ENCODE measurements at regions of chr9 and their contacts with region 1.

Region 1: GRCh38 chr9:76393963-76394679 is at the start of gene RFK:
- DNase-seq: peak; percentile 96
- ATAC-seq: peak; percentile 89
- H3K4me3 Mint-ChIP-seq: peak within 1 kb of the TSS; percentile 82
- H3K27ac Mint-ChIP-seq: peak within 1 kb of the TSS; percentile 91
- H3K4me1 Mint-ChIP-seq: peaks cover 11% of the 10 kb centered on the region
- H3K27me3 Mint-ChIP-seq: no peaks in the 10 kb centered on the region; the same call in 1 of the 2 replicates
- CTCF ChIP-seq: no peak
- total RNA-seq, gene RFK: 10.6 to 14.9 TPM (median 13.2 TPM) in 3 replicates

Region 2: DNA sequence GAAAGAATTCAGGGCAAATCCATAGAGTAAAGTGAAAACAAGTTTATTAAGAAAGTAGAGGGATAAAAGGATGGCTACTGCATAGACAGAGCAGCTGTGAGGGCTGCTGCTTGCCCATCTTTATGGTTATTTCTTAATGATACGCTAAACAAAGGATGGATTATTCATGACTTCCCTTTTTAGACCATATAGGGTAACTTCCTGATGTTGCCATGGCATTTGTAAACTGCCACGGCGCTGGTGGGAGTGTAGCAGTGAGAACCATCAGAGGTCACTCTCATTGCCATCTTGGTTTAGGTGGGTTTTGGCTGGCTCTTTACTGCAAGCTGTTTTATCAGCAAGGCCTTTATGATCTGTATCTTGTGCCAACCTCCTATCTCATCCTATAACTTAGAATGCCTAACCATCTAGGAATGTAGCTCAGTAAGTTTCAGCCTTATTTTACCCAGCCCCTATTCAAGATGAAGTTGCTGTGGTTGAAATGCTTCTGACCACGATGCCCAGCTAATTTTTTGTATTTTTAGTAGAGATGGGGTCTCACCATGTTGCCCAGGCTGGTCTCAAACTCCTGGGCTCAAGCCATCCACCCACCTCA is 42.0 kb before region 1 on chr9:
- CTCF ChIA-PET with region 1: no interaction called
- POLR2A ChIA-PET with region 1: no interaction called
- DNase-seq: no peak
- ATAC-seq: no peak
- H3K4me3 Mint-ChIP-seq: no peak overlapping the region
- H3K27ac Mint-ChIP-seq: no peak overlapping the region
- H3K4me1 Mint-ChIP-seq: no peaks in the 10 kb centered on the region
- H3K27me3 Mint-ChIP-seq: no peaks in the 10 kb centered on the region
- CTCF ChIP-seq: no peak

Region 3: GRCh38 chr9:76419782-76420380 is 25.8 kb after region 1 on chr9:
- CTCF ChIA-PET with region 1: interaction called, 13 read pairs
- POLR2A ChIA-PET with region 1: no interaction called
- DNase-seq: no peak
- ATAC-seq: peak; percentile 67
- H3K4me3 Mint-ChIP-seq: no peak overlapping the region
- H3K27ac Mint-ChIP-seq: no peak overlapping the region
- H3K4me1 Mint-ChIP-seq: peaks cover 34% of the 10 kb centered on the region
- H3K27me3 Mint-ChIP-seq: peaks cover 7% of the 10 kb centered on the region; the same call in 1 of the 2 replicates
- CTCF ChIP-seq: peak; percentile 41; the same call in 1 of the 2 replicates

Region 4: DNA sequence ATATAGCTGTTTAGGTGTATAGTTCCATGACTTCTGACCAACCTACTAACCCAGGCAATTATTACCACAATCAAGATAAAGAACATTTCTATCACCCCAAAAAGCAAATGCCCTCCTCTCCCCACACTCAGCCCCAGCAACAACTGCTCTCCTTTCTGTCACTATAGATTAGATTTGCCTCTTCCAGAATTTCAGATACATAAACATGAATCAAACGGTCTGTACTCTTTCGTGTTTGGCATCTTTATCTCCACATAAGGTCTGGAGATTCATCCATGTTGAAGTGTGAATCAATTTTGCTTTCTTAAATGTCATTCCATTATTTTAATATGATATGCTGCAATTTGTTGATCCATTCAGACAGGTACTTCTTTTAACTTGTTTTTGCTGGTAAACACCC is 54.4 kb after region 1 on chr9:
- CTCF ChIA-PET with region 1: no interaction called
- POLR2A ChIA-PET with region 1: no interaction called
- DNase-seq: no peak
- ATAC-seq: no peak
- H3K4me3 Mint-ChIP-seq: no peak overlapping the region
- H3K27ac Mint-ChIP-seq: no peak overlapping the region
- H3K4me1 Mint-ChIP-seq: peaks cover 20% of the 10 kb centered on the region
- H3K27me3 Mint-ChIP-seq: no peaks in the 10 kb centered on the region; the same call in 1 of the 2 replicates
- CTCF ChIP-seq: no peak

Region 5: GRCh38 chr9:76458903-76459690 is 65.0 kb after region 1 on chr9 and contains the start of gene GCNT1:
- CTCF ChIA-PET with region 1: interaction called, 15 read pairs
- POLR2A ChIA-PET with region 1: interaction called, 3 read pairs
- DNase-seq: peak; percentile 98
- ATAC-seq: peak; percentile 96
- H3K4me3 Mint-ChIP-seq: peak within 1 kb of the TSS; percentile 86
- H3K27ac Mint-ChIP-seq: no peak within 1 kb of the TSS; the same call in 1 of the 2 replicates
- H3K4me1 Mint-ChIP-seq: peaks cover 22% of the 10 kb centered on the region
- H3K27me3 Mint-ChIP-seq: peaks cover 17% of the 10 kb centered on the region
- CTCF ChIP-seq: no peak
- total RNA-seq, gene GCNT1: 15.6 to 17.2 TPM (median 16.1 TPM) in 3 replicates

Region 6: GRCh38 chr9:76542360-76542759 is 148.2 kb after region 1 on chr9:
- CTCF ChIA-PET with region 1: no interaction called
- POLR2A ChIA-PET with region 1: no interaction called
- DNase-seq: no peak
- ATAC-seq: peak; percentile 57
- H3K4me3 Mint-ChIP-seq: no peak overlapping the region
- H3K27ac Mint-ChIP-seq: no peak overlapping the region
- H3K4me1 Mint-ChIP-seq: peaks cover 13% of the 10 kb centered on the region
- H3K27me3 Mint-ChIP-seq: no peaks in the 10 kb centered on the region
- CTCF ChIP-seq: no peak

Region 7: DNA sequence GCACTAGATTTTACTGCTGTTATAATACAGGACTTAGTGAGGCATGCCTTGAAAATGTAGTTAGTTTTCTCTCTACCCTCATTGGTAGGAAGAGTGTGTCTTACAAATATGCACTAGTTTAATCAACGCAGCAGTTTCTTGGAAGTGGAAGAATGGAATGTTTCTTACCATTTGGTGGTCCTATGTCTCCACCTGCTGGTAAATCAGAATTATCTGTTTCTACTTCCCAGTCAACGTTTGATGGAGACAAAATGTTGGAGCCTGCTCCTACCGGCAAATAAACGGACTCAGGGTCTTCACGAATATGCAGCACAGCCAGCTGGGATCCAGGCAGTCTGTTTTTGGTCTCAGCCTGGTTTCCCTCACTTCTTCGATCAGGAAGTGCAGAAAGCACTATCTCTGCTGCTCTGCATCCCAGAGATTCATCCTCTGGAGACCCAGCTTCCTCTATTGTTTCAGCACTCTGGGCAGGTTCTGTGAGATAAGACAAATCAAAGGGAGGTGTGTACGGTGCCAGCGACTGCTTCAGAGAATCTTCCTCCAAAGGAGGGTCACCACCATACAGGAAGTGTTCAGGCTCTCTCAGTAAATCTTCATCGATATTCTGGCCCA is 310.6 kb after region 1 on chr9:
- CTCF ChIA-PET with region 1: interaction called, 13 read pairs
- POLR2A ChIA-PET with region 1: no interaction called
- DNase-seq: no peak
- ATAC-seq: peak; percentile 81
- H3K4me3 Mint-ChIP-seq: no peak overlapping the region
- H3K27ac Mint-ChIP-seq: no peak overlapping the region
- H3K4me1 Mint-ChIP-seq: peaks cover 11% of the 10 kb centered on the region
- H3K27me3 Mint-ChIP-seq: no peaks in the 10 kb centered on the region
- CTCF ChIP-seq: peak; percentile 54; the same call in 1 of the 2 replicates